ENCODE measurements at regions of chr18 and their contacts with region 1.

Region 1: GRCh38 chr18:77207540-77207939 is 42.1 kb upstream of the GALR1 start:
- DNase-seq: peak; percentile 89
- H3K4me3 ChIP-seq: peak overlapping the region; percentile 20; the same call in 1 of the 2 replicates
- H3K27ac ChIP-seq: peak overlapping the region; percentile 81
- H3K4me1 ChIP-seq: peaks cover 38% of the 10 kb centered on the region
- H3K27me3 ChIP-seq: no peaks in the 10 kb centered on the region

Region 2: DNA sequence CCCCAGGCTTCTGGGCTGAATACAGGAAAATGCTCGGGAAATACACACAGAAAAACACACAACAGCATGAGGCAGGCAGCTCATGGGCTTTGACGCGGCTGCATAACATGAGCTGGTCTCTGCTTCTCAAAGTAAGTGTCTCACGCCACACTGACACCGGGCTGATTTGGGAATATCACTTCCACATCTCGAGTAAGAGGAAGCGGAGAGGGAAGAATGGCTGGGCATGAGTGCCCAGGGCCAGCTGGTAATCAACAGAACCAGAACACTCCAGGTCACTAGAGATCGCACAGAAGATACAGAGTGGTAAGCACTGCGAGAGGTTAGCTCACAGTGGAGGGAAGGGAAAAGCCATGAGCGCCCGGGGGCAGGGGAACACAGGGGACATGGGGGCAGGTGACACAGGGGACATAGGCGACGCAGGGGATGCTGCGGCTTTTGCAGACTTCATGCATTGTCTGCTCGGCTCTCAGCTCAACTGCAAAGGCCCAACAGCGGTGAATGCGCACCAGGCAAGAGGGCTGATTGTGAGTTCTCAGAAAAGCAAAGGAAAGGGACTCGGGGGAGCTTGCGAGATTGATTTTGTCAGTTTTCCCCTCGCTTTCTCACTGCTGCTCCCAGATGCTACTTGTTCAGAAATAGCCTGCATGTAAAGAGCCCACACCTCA is 216.4 kb before region 1 on chr18:
- in situ Hi-C with region 1: loop called (anchors 10 kb)
- DNase-seq: no peak
- H3K4me3 ChIP-seq: no peak overlapping the region
- H3K27ac ChIP-seq: no peak overlapping the region
- H3K4me1 ChIP-seq: no peaks in the 10 kb centered on the region
- H3K27me3 ChIP-seq: peaks cover 21% of the 10 kb centered on the region; the same call in 1 of the 2 replicates

Region 3: DNA sequence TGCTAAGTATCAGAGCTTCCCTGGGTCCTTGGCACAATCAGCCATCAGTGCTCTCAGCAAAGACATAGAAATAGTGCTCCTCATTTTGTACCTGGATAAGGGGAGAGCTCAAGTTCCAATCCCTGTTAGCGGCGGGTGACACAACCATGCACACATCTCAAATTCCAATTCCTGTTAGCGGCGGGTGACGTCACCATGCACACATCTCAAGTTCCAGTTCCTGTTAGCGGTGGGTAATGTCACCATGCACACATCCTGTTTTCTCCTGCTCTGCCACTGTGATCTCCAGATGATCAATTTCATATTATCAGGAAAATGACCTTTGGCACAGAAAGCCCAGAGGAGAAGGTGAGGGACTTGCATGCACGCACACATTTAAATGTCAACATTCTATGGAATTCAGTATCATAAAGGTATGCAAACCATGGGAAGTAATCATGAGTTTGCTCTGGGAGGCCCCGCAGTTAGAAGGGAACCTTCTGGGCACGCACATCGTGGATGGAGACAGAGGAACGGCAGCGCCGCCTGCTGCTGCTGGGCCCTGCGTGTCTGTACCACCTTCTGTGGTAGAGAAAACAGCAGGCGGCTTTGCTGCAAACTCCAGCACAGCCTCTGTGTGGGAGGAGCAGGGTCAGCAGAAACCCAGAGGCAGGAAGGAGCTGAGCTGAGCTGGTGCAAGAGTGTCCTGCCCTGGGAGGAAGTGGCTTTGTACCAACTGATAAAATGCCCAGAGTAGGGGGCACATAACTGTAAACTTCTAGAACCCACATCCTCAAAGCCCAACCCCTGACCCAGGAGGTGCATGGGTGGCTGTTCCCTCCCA is 152.7 kb before region 1 on chr18:
- in situ Hi-C with region 1: loop called (anchors 25 kb)
- DNase-seq: peak; percentile 88
- H3K4me3 ChIP-seq: no peak overlapping the region
- H3K27ac ChIP-seq: peak overlapping the region; percentile 46; the same call in 1 of the 2 replicates
- H3K4me1 ChIP-seq: peaks cover 17% of the 10 kb centered on the region
- H3K27me3 ChIP-seq: no peaks in the 10 kb centered on the region